Activated CD4-positive, alpha-beta memory T cell treated with anti-CD3 and anti-CD28 coated beads for 36 hours (primary cell): ENCODE measurements at regions of chr9 and their contacts with region 1.

Region 1: GRCh38 chr9:98074115-98074990 is 17.8 kb downstream of the NANS start:
- DNase-seq: peak; percentile 79
- H3K4me3 Mint-ChIP-seq: no peak overlapping the region
- H3K27ac Mint-ChIP-seq: peak overlapping the region; percentile 93
- H3K4me1 Mint-ChIP-seq: peaks cover 41% of the 10 kb centered on the region
- H3K27me3 Mint-ChIP-seq: no peaks in the 10 kb centered on the region

Region 2: GRCh38 chr9:98022447-98022846 is 51.9 kb before region 1 on chr9:
- CTCF ChIA-PET with region 1: no interaction called
- POLR2A ChIA-PET with region 1: no interaction called
- intact Hi-C with region 1: no loop called
- DNase-seq: no peak
- H3K4me3 Mint-ChIP-seq: no peak overlapping the region
- H3K27ac Mint-ChIP-seq: no peak overlapping the region
- H3K4me1 Mint-ChIP-seq: no peaks in the 10 kb centered on the region
- H3K27me3 Mint-ChIP-seq: no peaks in the 10 kb centered on the region

Region 3: GRCh38 chr9:98056269-98057137 is 17.9 kb before region 1 on chr9 and contains the start of gene NANS:
- CTCF ChIA-PET with region 1: interaction called, 18 read pairs
- POLR2A ChIA-PET with region 1: interaction called, 5 read pairs
- intact Hi-C with region 1: loop called (anchors 1 kb)
- DNase-seq: peak; percentile 95
- H3K4me3 Mint-ChIP-seq: peak within 1 kb of the TSS; percentile 92
- H3K27ac Mint-ChIP-seq: peak within 1 kb of the TSS; percentile 91
- H3K4me1 Mint-ChIP-seq: peaks cover 19% of the 10 kb centered on the region
- H3K27me3 Mint-ChIP-seq: no peaks in the 10 kb centered on the region
- total RNA-seq, gene NANS: 48.4 to 51.9 TPM

Region 4: GRCh38 chr9:98118640-98119601 is 44.6 kb after region 1 on chr9 and contains the start of gene TRIM14:
- CTCF ChIA-PET with region 1: interaction called, 11 read pairs
- POLR2A ChIA-PET with region 1: no interaction called
- intact Hi-C with region 1: loop called (anchors 1 kb)
- DNase-seq: peak; percentile 75
- H3K4me3 Mint-ChIP-seq: peak within 1 kb of the TSS; percentile 89
- H3K27ac Mint-ChIP-seq: peak within 1 kb of the TSS; percentile 95
- H3K4me1 Mint-ChIP-seq: peaks cover 39% of the 10 kb centered on the region
- H3K27me3 Mint-ChIP-seq: no peaks in the 10 kb centered on the region
- total RNA-seq, gene TRIM14: 49.1 to 52.7 TPM

Region 5: DNA sequence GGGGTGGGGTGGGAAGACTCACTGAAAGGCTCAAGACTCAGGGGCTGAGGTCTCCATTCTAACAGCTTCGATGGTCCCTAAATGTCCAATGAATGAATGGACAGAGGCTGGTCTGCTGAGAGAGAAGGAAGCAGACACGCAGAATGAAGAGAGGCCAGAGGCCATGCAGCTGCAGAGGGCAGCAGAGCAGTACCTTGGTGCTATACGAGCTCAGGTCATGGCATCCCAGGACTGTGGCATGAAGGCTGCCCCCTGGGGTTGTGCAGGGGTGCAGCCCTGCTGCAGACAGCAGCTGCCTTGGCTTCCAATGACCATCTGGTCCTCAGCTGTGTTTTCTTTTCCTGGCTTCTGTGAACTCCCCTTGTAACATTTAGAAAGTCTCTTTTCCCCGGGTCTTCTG is 133.3 kb after region 1 on chr9:
- CTCF ChIA-PET with region 1: interaction called, 7 read pairs
- POLR2A ChIA-PET with region 1: no interaction called
- intact Hi-C with region 1: loop called (anchors 2 kb)
- DNase-seq: no peak
- H3K4me3 Mint-ChIP-seq: no peak overlapping the region
- H3K27ac Mint-ChIP-seq: no peak overlapping the region
- H3K4me1 Mint-ChIP-seq: peaks cover 2% of the 10 kb centered on the region
- H3K27me3 Mint-ChIP-seq: no peaks in the 10 kb centered on the region

Region 6: DNA sequence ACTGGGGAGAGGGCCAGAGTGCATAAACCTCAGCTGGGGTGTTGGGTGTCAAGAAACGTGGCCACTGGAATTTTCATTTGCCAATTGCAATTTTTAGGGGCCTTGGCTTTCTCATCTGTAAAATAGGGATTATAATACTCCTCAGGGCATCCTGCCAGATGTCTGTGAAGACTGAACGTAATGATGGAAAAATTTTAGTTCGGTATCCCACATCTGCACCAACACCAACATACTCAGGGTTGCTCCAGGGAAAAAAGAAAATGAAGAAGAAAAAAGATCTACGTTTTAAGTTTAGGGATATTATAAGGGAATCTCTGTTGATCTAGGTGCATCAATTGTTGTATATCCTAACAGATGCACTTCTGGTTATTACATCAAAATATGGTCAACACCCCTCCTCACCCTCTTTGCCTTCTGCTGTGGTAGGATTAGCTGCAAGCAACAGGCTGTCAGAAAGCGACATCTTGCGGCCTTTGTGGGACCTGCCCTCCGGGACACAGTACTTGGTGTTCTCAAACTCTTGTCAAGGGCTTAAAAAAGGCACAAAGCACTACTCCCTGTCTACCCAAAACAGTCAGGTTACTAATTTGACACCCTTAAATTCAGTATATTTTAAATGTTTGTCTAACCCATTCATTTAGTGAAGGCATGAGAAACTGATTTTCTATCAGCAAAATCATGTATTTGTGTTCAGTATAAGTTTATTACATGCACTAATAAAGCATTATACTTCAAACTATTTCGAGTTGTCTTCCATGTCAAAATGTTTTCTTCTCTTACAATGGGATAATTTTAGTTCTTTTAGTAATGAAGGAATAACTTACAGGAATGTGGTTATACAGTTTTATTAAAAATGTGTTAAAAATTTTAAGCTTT is 189.4 kb after region 1 on chr9:
- CTCF ChIA-PET with region 1: interaction called, 8 read pairs
- POLR2A ChIA-PET with region 1: no interaction called
- intact Hi-C with region 1: loop called (anchors 1 kb)
- DNase-seq: peak; percentile 90
- H3K4me3 Mint-ChIP-seq: no peak overlapping the region
- H3K27ac Mint-ChIP-seq: peak overlapping the region; percentile 39
- H3K4me1 Mint-ChIP-seq: no peaks in the 10 kb centered on the region
- H3K27me3 Mint-ChIP-seq: peaks cover 3% of the 10 kb centered on the region